Activated T-helper 2 cell treated with anti-CD3 and anti-CD28 coated beads, Interferon-gamma antibody, Interleukin-2, Interleukin-4, amounts not matched to agents 10 μg/mL and 5 μg/mL and 100 μg/mL, durations not matched to agents 14 hours and 24 hours and 36 hours (primary cell): ENCODE measurements at regions of chr15 and their contacts with region 1.

Region 1: DNA sequence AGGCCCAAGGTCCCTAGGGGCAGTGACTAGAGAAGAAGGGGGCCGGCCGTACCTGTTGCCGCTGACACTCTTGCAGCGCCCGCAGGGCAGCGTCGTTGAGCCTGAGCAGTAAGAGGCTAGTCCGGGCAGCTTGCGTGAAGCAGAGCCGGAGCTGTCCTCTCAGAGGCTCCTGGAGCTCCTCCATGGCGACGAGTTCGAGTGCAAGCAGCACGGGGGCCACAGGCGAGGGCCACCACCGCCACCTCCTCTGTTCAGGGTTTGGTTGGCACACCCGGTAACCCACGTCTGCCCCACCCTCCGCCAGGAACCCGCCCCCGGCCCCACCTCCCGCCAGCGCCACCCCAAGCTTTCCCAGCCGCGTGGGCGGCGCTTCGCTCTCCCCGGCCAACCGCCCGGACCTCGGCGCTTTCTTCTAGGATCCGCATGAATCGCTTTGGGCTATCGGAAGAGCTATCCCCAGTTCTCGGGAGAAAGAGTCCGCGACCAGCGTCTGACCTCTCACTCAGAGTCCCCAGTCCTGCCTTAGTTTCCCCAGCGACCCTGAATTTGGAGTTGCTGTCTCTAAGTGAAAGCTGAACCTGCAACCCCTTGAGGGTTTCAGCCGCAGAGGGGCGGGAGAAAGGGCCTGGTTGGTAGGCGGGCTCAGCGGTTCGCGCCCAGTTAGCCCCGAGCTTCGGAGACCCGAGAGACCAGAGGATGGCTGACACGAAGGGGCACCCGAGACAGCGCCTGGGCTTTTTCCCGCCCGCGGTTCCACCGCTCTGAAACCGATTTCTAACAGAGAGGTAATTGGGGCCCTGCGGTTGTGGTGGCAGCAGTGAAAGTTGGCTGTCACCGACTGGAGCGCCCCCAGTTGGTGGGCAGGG is at the start of gene ELL3:
- DNase-seq: peak; percentile 79
- H3K4me3 Mint-ChIP-seq: peak within 1 kb of the TSS; percentile 83
- H3K27ac Mint-ChIP-seq: peak within 1 kb of the TSS; percentile 83
- H3K4me1 Mint-ChIP-seq: peaks cover 7% of the 10 kb centered on the region
- H3K27me3 Mint-ChIP-seq: peaks cover 9% of the 10 kb centered on the region
- total RNA-seq, gene ELL3: 1.0 and 1.3 TPM in 2 replicates

Region 2: GRCh38 chr15:43791993-43792760 is 15.2 kb after region 1 on chr15 and contains the start of gene SERF2:
- intact Hi-C with region 1: loop called (anchors 2 kb)
- DNase-seq: peak; percentile 99
- H3K4me3 Mint-ChIP-seq: peak within 1 kb of the TSS; percentile 97
- H3K27ac Mint-ChIP-seq: peak within 1 kb of the TSS; percentile 97
- H3K4me1 Mint-ChIP-seq: peaks cover 25% of the 10 kb centered on the region
- H3K27me3 Mint-ChIP-seq: no peaks in the 10 kb centered on the region
- total RNA-seq, gene SERF2: 580 and 598 TPM in 2 replicates

Region 3: GRCh38 chr15:43824302-43825246 is 47.6 kb after region 1 on chr15 and contains the start of gene MFAP1:
- intact Hi-C with region 1: loop called (anchors 1 kb)
- DNase-seq: peak; percentile 91
- H3K4me3 Mint-ChIP-seq: peak within 1 kb of the TSS; percentile 97
- H3K27ac Mint-ChIP-seq: peak within 1 kb of the TSS; percentile 98
- H3K4me1 Mint-ChIP-seq: peaks cover 28% of the 10 kb centered on the region
- H3K27me3 Mint-ChIP-seq: no peaks in the 10 kb centered on the region
- total RNA-seq, gene MFAP1: 43.7 and 44.3 TPM in 2 replicates